ENCODE measurements at regions of chr19 and their contacts with region 1.

Region 1: GRCh38 chr19:40777937-40778705 is at the start of gene RAB4B:
- DNase-seq: peak; percentile 96
- H3K4me3 ChIP-seq: peak within 1 kb of the TSS; percentile 74
- CTCF ChIP-seq: no peak

Region 2: GRCh38 chr19:40549007-40549708 is 229.0 kb before region 1 on chr19:
- CTCF ChIA-PET with region 1: no interaction called
- POLR2A ChIA-PET with region 1: no interaction called
- DNase-seq: no peak
- H3K4me3 ChIP-seq: no peak overlapping the region
- CTCF ChIP-seq: peak; percentile 67

Region 3: GRCh38 chr19:40705362-40705651 is 72.8 kb before region 1 on chr19:
- CTCF ChIA-PET with region 1: no interaction called
- POLR2A ChIA-PET with region 1: no interaction called
- DNase-seq: no peak
- H3K4me3 ChIP-seq: no peak overlapping the region
- CTCF ChIP-seq: no peak

Region 4: GRCh38 chr19:40716655-40717324 is 61.3 kb before region 1 on chr19 and contains the starts of genes COQ8B and ITPKC:
- CTCF ChIA-PET with region 1: no interaction called
- POLR2A ChIA-PET with region 1: interaction called, 10 read pairs
- DNase-seq: peak; percentile 83
- H3K4me3 ChIP-seq: peak within 1 kb of the TSS; percentile 77
- CTCF ChIP-seq: no peak

Region 5: GRCh38 chr19:40798223-40798996 is 20.3 kb after region 1 on chr19:
- CTCF ChIA-PET with region 1: interaction called, 23 read pairs
- POLR2A ChIA-PET with region 1: interaction called, 11 read pairs
- DNase-seq: peak; percentile 97
- H3K4me3 ChIP-seq: peak overlapping the region; percentile 65
- CTCF ChIP-seq: peak; percentile 36

Region 6: DNA sequence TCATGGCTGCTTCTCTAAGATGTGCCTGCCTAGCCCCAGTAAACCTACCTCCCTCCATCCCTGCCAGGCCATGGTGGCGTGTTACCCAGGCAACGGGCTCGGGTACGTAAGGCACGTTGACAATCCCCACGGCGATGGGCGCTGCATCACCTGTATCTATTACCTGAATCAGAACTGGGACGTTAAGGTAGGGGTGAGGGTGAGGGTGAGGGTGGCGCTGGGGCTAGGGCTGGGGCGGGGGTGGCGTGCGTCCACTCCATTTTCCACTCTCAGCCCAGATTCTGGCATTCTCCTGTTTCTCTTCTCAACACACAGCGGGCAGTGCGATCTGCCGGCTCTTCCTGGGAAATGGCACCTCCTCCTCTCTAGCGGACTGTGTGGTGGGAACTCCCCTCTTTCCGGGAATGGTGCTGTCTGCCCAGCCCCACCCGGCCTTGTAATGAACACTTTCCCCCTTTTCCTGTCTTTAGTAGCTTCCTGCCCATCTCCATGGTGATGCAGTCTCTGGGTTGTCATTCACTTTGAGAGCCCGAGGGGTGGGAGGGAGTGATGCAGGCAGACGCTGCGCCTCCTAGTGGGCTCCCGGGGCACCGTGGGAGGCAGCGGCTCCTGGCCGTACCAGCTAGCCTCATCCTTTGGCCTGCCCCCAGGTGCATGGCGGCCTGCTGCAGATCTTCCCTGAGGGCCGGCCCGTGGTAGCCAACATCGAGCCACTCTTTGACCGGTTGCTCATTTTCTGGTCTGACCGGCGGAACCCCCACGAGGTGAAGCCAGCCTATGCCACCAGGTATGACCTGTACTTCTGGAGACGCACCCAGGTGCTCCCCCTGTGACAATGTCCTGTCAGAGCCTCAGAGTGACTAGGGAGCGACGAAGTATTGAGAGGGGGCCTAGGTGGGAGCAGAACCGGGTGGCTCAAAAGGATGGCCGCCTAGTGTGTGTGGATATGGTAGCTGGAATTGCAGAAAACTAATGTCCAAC is 28.7 kb after region 1 on chr19:
- CTCF ChIA-PET with region 1: interaction called, 21 read pairs
- POLR2A ChIA-PET with region 1: interaction called, 3 read pairs
- DNase-seq: peak; percentile 63
- H3K4me3 ChIP-seq: peak overlapping the region; percentile 20
- CTCF ChIP-seq: peak; percentile 98

Region 7: DNA sequence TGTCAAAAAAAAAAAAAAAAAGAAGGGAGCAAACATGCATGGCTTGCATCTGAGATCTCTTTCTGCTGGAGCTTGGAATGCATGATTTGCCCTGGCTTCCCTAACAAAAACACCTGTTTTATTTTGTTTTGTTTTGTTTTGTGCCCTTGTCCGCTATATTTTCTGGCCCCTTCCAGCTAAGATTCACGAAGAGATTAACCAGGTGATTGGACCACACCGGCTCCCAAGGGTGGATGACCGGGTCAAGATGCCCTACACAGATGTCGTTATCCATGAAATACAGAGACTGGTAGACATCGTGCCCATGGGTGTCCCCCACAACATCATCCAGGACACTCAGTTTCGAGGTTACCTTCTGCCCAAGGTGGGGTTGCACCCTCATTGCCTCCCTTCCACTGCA is 119.8 kb after region 1 on chr19:
- CTCF ChIA-PET with region 1: no interaction called
- POLR2A ChIA-PET with region 1: no interaction called
- DNase-seq: no peak
- H3K4me3 ChIP-seq: no peak overlapping the region
- CTCF ChIP-seq: no peak

Measured in AG04449 (cell line).